PC-9 (cell line): ENCODE measurements at regions of chr17 and their contacts with region 1.

Region 1: GRCh38 chr17:8718001-8718563 is 26.6 kb downstream of the CCDC42 start:
- DNase-seq: no peak
- H3K4me3 ChIP-seq: no peak overlapping the region
- H3K27ac ChIP-seq: no peak overlapping the region
- H3K4me1 ChIP-seq: no peaks in the 10 kb centered on the region
- H3K27me3 ChIP-seq: peaks cover 31% of the 10 kb centered on the region
- CTCF ChIP-seq: no peak

Region 2: DNA sequence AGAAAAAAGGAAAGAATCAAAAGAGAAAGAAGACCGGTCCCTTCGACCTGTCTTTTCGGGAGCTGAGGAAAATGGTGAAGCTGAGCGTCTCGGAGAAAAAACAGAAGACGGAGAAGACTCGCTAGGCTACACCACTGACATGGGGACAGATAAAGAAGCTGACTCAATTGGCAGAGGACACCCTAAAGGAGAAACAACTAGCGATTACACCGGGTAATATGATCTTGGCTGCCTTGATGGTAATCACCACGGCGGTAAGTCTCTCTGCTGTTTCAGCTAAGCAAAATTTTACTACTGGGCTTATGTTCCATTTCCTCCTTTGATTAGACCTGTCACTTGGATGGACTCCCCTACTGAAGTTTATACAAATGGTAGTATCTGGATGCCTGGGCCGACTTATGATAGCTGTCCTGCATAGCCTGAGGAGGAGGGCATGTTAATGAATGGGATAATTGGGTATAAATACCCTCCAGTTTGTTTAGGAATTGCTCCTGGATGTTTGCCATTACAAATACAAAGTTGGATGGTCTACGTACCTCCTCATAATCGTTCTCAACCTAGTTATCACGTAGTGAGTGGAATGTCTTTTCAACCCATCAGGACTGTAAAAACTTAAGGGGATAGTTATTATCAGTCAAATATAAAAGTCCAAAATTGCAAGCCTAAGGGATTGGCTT is 655.1 kb before region 1 on chr17:
- CTCF ChIA-PET with region 1: interaction called, 14 read pairs
- POLR2A ChIA-PET with region 1: no interaction called
- intact Hi-C with region 1: no loop called
- DNase-seq: no peak
- H3K4me3 ChIP-seq: no peak overlapping the region
- H3K27ac ChIP-seq: no peak overlapping the region
- H3K4me1 ChIP-seq: peaks cover 3% of the 10 kb centered on the region
- H3K27me3 ChIP-seq: peaks cover 13% of the 10 kb centered on the region
- CTCF ChIP-seq: no peak

Region 3: GRCh38 chr17:8488901-8489300 is 229.2 kb before region 1 on chr17:
- CTCF ChIA-PET with region 1: no interaction called
- POLR2A ChIA-PET with region 1: no interaction called
- intact Hi-C with region 1: no loop called
- DNase-seq: no peak
- H3K4me3 ChIP-seq: no peak overlapping the region
- H3K27ac ChIP-seq: no peak overlapping the region
- H3K4me1 ChIP-seq: no peaks in the 10 kb centered on the region
- H3K27me3 ChIP-seq: no peaks in the 10 kb centered on the region
- CTCF ChIP-seq: no peak

Region 4: GRCh38 chr17:8905331-8905730 is 187.2 kb after region 1 on chr17:
- CTCF ChIA-PET with region 1: no interaction called
- POLR2A ChIA-PET with region 1: no interaction called
- intact Hi-C with region 1: no loop called
- DNase-seq: no peak
- H3K4me3 ChIP-seq: no peak overlapping the region
- H3K27ac ChIP-seq: no peak overlapping the region
- H3K4me1 ChIP-seq: no peaks in the 10 kb centered on the region
- H3K27me3 ChIP-seq: peaks cover 64% of the 10 kb centered on the region
- CTCF ChIP-seq: no peak